Cardiac septum (tissue), 1 donor: ENCODE measurements at regions of chr18 and their contacts with region 1.

Region 1: GRCh38 chr18:8654503-8655451 is 45.5 kb downstream of the RAB12 start:
- DNase-seq: no peak

Region 2: GRCh38 chr18:8982416-8983184 is 327.8 kb after region 1 on chr18:
- intact Hi-C with region 1: loop called (anchors 5 kb)
- DNase-seq: no peak